ENCODE measurements at regions of chr1 and their contacts with region 1.

Region 1: DNA sequence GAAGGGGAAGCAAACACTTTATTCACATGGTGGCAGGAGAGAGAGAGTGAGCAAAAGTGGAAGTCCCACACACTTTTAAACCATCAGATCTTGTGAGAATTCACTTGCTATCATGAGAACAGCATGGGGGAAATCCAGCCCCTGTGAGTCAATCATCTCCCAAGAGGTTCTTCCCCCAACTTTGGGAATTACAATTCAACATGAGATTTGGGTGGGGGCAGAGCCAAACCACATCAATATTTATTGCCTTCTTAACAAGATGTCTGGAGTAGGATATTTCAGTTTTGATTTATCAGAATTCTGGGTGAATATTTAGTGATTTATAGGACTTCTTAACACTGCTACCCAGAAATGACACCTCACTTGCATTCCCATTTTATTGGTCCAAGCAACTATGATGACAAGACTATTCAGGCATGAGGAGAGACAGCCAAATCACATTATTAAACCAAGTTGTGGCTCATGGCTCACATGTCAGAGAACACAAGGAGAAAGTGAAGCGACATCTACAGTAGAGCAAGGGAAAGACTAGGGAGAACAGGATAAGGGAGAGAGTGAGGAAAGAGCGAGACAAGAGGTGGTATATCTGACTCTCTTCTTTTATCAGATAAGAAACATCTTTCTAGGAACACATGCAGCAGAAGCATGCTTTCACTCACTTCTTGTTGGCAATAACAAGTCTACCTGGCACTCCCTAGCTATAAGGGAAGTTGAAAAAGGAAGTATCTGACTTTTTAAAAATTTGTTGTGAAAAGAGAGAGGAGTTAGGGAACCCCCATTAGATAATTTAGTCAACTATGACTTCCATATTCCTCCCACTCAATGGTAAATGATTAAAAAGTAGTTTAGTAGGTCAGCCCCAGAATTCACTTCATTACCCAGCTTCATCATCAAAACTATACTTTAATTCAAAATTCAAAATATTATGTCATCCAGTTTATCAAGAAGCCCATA is 36.6 kb upstream of the PTPRC start:
- DNase-seq: peak; percentile 87
- H3K4me3 Mint-ChIP-seq: peak overlapping the region; percentile 51
- H3K27ac Mint-ChIP-seq: peak overlapping the region; percentile 85
- H3K4me1 Mint-ChIP-seq: peaks cover 87% of the 10 kb centered on the region
- H3K27me3 Mint-ChIP-seq: no peaks in the 10 kb centered on the region

Region 2: DNA sequence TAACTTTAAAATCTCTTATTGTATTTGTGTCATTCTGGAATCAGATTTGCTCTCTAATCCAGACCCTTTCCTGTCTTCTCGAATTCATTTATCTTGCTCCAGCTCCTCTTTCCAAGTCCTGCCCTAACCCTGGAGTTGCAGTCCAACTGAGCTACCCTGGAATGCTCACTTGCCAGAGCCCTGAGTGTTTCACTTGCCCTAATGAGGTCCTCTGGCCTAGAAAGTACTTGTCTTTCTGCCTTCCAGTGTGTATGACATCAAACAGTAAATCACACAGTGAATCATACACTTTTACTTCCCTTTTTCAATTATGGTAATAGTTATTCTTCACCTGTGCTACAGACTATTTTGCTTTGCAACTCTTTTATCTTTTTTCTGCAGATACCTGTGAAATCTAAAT is 348.5 kb before region 1 on chr1:
- CTCF ChIA-PET with region 1: no interaction called
- intact Hi-C with region 1: loop called (anchors 2 kb)
- DNase-seq: no peak
- H3K4me3 Mint-ChIP-seq: no peak overlapping the region
- H3K27ac Mint-ChIP-seq: no peak overlapping the region
- H3K4me1 Mint-ChIP-seq: peaks cover 46% of the 10 kb centered on the region
- H3K27me3 Mint-ChIP-seq: no peaks in the 10 kb centered on the region

Region 3: GRCh38 chr1:198556971-198557370 is 45.2 kb before region 1 on chr1:
- CTCF ChIA-PET with region 1: interaction called, 3 read pairs
- intact Hi-C with region 1: loop called (anchors 1 kb)
- DNase-seq: peak; percentile 85
- H3K4me3 Mint-ChIP-seq: peak overlapping the region; percentile 73
- H3K27ac Mint-ChIP-seq: peak overlapping the region; percentile 85
- H3K4me1 Mint-ChIP-seq: peaks cover 81% of the 10 kb centered on the region
- H3K27me3 Mint-ChIP-seq: no peaks in the 10 kb centered on the region

Region 4: GRCh38 chr1:198584163-198584562 is 18.1 kb before region 1 on chr1:
- CTCF ChIA-PET with region 1: no interaction called
- intact Hi-C with region 1: no loop called
- DNase-seq: no peak
- H3K4me3 Mint-ChIP-seq: no peak overlapping the region
- H3K27ac Mint-ChIP-seq: no peak overlapping the region
- H3K4me1 Mint-ChIP-seq: peaks cover 6% of the 10 kb centered on the region
- H3K27me3 Mint-ChIP-seq: no peaks in the 10 kb centered on the region

Region 5: DNA sequence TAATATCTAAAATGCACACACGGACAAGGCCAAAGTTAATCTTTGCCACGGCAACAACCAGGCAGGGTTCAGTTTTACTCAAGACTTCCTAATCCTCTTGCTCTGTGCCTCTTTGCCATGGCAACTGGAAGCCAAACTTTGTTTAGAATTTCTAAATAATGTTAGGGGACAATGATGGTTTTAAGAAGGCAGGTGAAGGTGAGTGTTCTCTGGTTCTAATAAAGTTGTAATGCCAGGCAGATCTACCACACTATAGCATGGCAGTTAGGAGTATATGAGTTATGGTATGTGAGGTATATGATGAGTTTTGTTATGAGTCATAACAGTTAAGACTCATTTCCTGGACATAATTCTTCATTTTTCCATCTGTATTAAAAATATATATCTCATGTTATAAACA is 39.3 kb after region 1 on chr1:
- CTCF ChIA-PET with region 1: interaction called, 3 read pairs
- intact Hi-C with region 1: loop called (anchors 1 kb)
- DNase-seq: peak; percentile 49
- H3K4me3 Mint-ChIP-seq: peak overlapping the region; percentile 92
- H3K27ac Mint-ChIP-seq: peak overlapping the region; percentile 100
- H3K4me1 Mint-ChIP-seq: peaks cover 41% of the 10 kb centered on the region
- H3K27me3 Mint-ChIP-seq: no peaks in the 10 kb centered on the region

Region 6: GRCh38 chr1:198756470-198756869 is 154.3 kb after region 1 on chr1:
- CTCF ChIA-PET with region 1: no interaction called
- intact Hi-C with region 1: no loop called
- DNase-seq: no peak
- H3K4me3 Mint-ChIP-seq: no peak overlapping the region
- H3K27ac Mint-ChIP-seq: peak overlapping the region; percentile 4
- H3K4me1 Mint-ChIP-seq: peaks cover 10% of the 10 kb centered on the region
- H3K27me3 Mint-ChIP-seq: no peaks in the 10 kb centered on the region

Region 7: DNA sequence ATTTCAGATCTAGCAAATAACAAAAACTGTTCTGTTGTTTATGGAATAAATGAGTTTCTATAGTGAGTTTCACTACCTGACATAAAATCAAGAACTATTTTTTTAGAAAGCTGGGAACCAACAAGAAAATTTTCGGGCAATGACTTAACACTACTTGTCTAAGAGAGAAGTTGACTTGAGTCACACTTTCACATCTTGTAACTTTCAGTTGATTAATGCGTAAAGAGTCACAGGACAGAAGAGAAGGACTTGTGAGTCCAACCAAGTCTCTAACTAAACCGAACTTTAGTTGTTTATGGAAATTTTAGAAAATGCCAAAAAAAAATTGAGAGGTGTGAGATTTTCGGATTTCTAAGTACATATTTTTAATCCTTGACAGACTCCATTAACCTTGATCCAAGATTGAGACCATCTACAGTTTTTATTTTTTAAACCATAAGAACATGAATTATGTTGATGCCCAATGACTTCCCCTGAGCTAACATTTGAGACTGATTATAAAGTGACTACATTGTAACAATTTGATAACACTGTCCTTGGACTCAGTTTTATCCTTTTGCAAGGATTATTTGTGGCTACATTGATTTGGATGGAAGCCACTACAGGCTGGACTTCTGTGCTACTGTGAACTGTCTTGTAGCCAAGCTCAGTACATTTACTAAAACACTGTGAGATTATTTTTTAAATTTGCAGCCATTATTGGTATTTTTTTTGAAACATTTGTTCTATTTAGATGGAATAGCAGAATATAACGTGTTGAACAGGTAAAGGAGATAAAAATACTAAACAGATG is 320.6 kb after region 1 on chr1:
- CTCF ChIA-PET with region 1: no interaction called
- intact Hi-C with region 1: loop called (anchors 1 kb)
- DNase-seq: no peak
- H3K4me3 Mint-ChIP-seq: no peak overlapping the region
- H3K27ac Mint-ChIP-seq: peak overlapping the region; percentile 79
- H3K4me1 Mint-ChIP-seq: peaks cover 71% of the 10 kb centered on the region
- H3K27me3 Mint-ChIP-seq: no peaks in the 10 kb centered on the region

Region 8: DNA sequence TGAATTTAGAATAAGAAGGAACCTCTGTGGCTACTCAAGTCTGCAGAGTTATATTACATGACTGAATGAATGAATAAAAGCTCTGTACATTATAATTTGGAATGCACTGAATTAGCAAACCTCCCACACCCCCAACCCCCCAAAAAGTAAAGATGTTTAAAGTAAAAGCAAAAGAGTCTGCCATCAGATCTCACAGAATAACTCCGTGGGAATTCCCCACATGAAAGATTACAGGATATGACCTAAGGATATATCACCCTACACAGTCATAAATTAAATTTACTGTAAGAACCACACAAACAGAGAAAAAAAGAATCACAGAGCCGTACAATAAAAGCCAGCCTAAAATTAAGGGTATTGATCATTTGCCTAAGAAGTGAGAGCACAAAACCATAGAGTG is 624.0 kb after region 1 on chr1:
- CTCF ChIA-PET with region 1: no interaction called
- intact Hi-C with region 1: loop called (anchors 1 kb)
- DNase-seq: peak; percentile 66
- H3K4me3 Mint-ChIP-seq: peak overlapping the region; percentile 46
- H3K27ac Mint-ChIP-seq: peak overlapping the region; percentile 27
- H3K4me1 Mint-ChIP-seq: peaks cover 23% of the 10 kb centered on the region
- H3K27me3 Mint-ChIP-seq: no peaks in the 10 kb centered on the region

Measured in activated naive CD4-positive, alpha-beta T cell treated with anti-CD3 and anti-CD28 coated beads for 36 hours (primary cell).